A549 (cell line): ENCODE measurements at regions of chr5 and their contacts with region 1.

Region 1: GRCh38 chr5:140372971-140373487 is 13.0 kb downstream of the SLC4A9 start:
- DNase-seq: peak; percentile 79 to 82
- ATAC-seq: peak; percentile 92 to 95
- H3K4me3 ChIP-seq: no peak overlapping the region
- H3K27ac ChIP-seq: peak overlapping the region in 1 of 2 experiments; percentile 50; a peak in 1 of 6 replicates
- H3K4me1 ChIP-seq: no peaks in the 10 kb centered on the region
- CTCF ChIP-seq: peak; percentile 74
- EP300 ChIP-seq: no peak
- POLR2A ChIP-seq: no peak
- RAD21 ChIP-seq: peak; percentile 76 to 85

Region 2: DNA sequence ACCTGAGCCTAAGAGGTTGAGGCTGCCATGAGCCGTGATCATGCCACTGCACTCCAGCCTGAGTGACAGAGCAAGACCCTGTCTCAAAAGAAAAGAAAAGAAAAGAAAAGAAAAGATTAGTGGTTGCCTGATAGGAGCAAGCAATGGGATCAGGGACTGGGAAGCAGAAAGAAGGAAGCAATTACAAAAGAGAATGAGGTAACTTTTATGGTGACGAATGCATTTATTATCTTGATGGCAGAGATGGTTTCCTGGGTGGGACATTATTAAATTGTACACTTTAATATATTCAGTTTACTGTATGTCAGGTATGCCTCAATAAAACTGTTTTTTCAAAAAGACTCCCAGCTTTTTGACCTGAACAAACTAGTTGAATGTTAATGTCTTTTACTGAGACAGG is 62.6 kb before region 1 on chr5:
- CTCF ChIA-PET with region 1: no interaction called
- POLR2A ChIA-PET with region 1: no interaction called
- DNase-seq: no peak
- ATAC-seq: no peak
- H3K4me3 ChIP-seq: no peak overlapping the region
- H3K27ac ChIP-seq: peak overlapping the region; percentile 32 to 68; a peak in 3 of 6 replicates
- H3K4me1 ChIP-seq: peaks cover 23% of the 10 kb centered on the region
- CTCF ChIP-seq: no peak
- EP300 ChIP-seq: no peak
- POLR2A ChIP-seq: no peak
- RAD21 ChIP-seq: no peak

Region 3: GRCh38 chr5:140357726-140358093 is 15.3 kb before region 1 on chr5:
- CTCF ChIA-PET with region 1: interaction called, 71 read pairs
- POLR2A ChIA-PET with region 1: no interaction called
- DNase-seq: peak; percentile 89 to 93
- ATAC-seq: peak; percentile 83 to 96
- H3K4me3 ChIP-seq: no peak overlapping the region
- H3K27ac ChIP-seq: peak overlapping the region; percentile 47 to 66; a peak in 5 of 6 replicates
- H3K4me1 ChIP-seq: peaks cover 5% of the 10 kb centered on the region; the same call in 1 of the 3 replicates
- CTCF ChIP-seq: peak; percentile 89
- EP300 ChIP-seq: no peak
- POLR2A ChIP-seq: no peak
- RAD21 ChIP-seq: peak; percentile 81 to 82

Region 4: DNA sequence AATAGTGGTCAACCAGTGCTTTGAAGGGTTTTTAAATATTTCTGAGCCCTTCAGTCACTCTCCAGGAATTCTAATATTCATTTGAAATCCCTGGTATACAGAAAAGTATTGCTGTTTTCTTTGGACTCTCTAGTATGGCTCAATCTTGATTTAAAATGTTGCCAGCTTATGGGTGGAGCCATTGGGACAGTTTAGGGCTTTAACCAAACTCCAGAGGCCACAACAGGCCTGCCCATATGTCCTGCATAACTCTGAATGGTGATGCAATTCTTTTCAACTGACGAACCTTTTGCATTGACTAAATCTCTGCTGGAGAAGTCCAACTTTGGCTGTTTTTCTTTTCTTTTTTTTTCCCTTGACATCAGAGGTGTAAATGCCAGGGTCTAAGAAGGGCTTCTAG is 18.3 kb after region 1 on chr5:
- CTCF ChIA-PET with region 1: interaction called, 49 read pairs
- POLR2A ChIA-PET with region 1: no interaction called
- DNase-seq: no peak
- ATAC-seq: 0 out of 6 replicates have a peak, but pooled peaks of 1 of the 2 experiments have one; percentile 43
- H3K4me3 ChIP-seq: no peak overlapping the region
- H3K27ac ChIP-seq: no peak overlapping the region
- H3K4me1 ChIP-seq: no peaks in the 10 kb centered on the region
- CTCF ChIP-seq: no peak
- EP300 ChIP-seq: no peak
- POLR2A ChIP-seq: no peak
- RAD21 ChIP-seq: no peak

Region 5: DNA sequence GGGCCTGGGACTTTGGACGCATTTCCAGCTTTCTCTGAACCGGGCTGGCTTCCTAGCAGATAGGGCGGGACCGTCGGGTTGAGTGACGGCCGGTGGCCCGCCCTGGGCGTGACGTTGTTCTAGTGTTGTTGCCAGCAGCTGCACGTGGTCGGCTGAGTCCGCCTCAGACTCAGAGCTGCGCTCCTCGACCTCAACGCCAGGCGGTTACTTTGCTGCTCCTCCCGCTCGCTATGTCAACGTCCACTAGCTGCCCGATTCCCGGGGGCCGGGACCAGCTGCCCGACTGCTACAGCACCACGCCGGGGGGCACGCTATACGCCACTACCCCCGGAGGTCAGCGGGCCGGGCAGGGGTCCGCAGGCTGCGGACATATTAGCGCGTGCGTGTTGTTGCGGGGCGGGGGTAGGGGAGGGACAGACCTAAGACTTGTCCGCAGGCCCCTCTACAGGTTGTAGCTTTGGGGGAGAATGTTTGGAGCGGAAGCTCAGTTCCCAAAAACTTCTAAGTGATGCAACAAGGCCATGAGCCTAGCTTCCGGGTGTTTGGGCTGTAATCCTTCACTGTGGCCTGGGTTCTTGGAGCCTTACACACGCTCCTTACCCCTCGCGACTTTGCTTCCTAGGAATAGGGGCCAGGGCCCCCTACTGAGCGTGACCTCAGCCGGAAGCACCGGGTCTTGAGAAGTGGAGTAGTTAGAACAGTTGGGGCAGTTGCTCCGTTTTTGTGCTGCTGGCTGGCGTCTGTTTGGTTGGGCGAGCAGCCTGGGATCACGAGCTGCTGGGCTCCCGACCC is 174.7 kb after region 1 on chr5 and contains the start of gene EIF4EBP3:
- CTCF ChIA-PET with region 1: interaction called, 11 read pairs
- POLR2A ChIA-PET with region 1: interaction called, 3 read pairs
- DNase-seq: peak; percentile 87 to 90
- ATAC-seq: peak; percentile 94 to 96
- H3K4me3 ChIP-seq: no peak within 1 kb of the TSS
- H3K27ac ChIP-seq: peak within 1 kb of the TSS; percentile 56 to 75
- H3K4me1 ChIP-seq: peaks cover 26% of the 10 kb centered on the region
- CTCF ChIP-seq: no peak
- EP300 ChIP-seq: no peak
- POLR2A ChIP-seq: no peak
- RAD21 ChIP-seq: no peak
- polyA plus RNA-seq, gene EIF4EBP3: 2.0 and 2.9 TPM in 2 replicates

Region 6: DNA sequence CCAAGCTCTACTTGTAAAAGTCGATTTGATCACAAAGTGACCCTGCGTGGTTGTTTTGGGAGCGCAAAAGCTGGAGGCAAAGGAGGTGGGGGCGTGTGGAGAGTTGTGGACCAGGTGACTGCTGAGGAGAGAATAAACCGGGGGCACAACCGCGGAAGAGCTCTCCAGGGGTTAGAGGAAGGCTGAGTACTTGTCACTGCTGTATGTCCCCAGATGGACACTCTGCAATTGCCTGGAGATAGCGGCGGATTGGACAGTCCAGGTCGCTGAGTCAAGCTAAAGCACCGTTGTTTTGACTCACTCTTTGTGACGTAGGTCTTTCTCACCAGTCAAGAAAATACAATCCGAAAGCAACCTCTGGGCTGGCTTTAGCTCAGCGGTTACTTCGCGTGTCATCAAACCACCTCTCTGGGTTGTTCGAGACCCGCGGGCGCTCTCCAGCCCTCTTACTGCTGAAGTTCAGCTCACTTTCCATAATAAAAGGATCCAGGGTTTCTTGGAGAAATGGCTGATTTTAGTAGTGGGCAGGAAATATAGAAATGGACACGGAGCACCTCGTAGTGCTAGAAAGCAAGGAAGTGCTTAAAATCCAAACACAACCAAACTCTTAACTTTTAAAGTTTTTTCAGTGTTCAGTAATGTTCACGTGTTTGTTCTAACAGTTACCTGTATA is 352.9 kb after region 1 on chr5:
- CTCF ChIA-PET with region 1: interaction called, 28 read pairs
- POLR2A ChIA-PET with region 1: no interaction called
- DNase-seq: peak; percentile 90 to 98
- ATAC-seq: peak; percentile 97 to 98
- H3K4me3 ChIP-seq: peak overlapping the region; percentile 53
- H3K27ac ChIP-seq: peak overlapping the region; percentile 24 to 69; a peak in 4 of 6 replicates
- H3K4me1 ChIP-seq: 0 out of 3 replicates have a peak, but pooled peaks cover 3% of the 10 kb centered on the region
- CTCF ChIP-seq: no peak
- EP300 ChIP-seq: no peak
- POLR2A ChIP-seq: no peak
- RAD21 ChIP-seq: no peak; a peak in 1 of 5 replicates